H1 (cell line): ENCODE measurements at regions of chrX and their contacts with region 1.

Region 1: DNA sequence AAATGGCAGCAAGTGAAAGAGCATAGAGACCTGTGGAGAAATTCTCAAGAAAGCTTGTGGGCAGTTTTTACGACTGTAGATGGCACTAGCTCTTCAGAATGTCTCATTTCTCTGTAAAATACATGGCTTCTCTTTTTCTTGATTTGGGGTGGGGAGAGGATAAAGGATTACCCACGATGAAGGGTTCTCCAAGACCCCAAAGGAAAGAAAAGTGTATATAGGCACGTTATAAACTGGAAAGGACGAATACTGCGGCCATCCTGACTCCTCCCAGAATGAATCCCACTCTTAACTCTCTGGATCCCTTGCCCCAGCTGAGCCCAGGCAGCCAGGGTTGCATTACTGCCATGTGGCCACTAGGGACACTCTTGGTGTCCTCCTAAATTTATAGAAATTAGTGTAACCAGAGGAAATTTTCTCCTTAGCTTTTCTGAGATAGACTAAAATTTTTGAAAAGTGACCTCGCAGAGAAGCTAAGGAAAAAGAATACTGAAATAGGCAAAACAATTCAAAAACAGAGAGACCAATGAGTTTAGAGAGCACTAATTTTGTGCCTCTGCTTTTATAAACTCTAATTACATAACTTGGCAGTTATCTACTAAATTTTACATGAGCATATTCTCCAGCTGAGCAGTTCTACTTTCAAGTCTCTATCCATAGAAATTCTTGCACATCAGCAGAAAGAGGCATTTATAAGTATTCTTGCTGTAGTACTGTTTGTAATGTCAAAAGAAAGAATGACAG is 37.8 kb upstream of the PCDH19 start:
- DNase-seq: peak in 1 of 2 experiments; percentile 63
- H3K4me3 ChIP-seq: peak overlapping the region in 2 of 4 experiments; percentile 10 to 53; a peak in 3 of 8 replicates
- H3K27ac ChIP-seq: no peak overlapping the region
- H3K4me1 ChIP-seq: no peaks in the 10 kb centered on the region; a peak in 1 of 7 replicates
- H3K27me3 ChIP-seq: no peaks in the 10 kb centered on the region
- CTCF ChIP-seq: peak; percentile 46 to 72 (median 51)
- EP300 ChIP-seq: no peak
- POLR2A ChIP-seq: no peak
- RAD21 ChIP-seq: peak in 1 of 2 experiments; percentile 23; a peak in 3 of 4 replicates

Region 2: GRCh38 chrX:100435706-100436105 is 12.1 kb before region 1 on chrX:
- CTCF ChIA-PET with region 1: interaction called, 19 read pairs
- POLR2A ChIA-PET with region 1: no interaction called
- DNase-seq: no peak
- H3K4me3 ChIP-seq: no peak overlapping the region
- H3K27ac ChIP-seq: no peak overlapping the region
- H3K4me1 ChIP-seq: peaks cover 0 to 9% (median 4%) of the 10 kb centered on the region in 4 experiments; a peak in 4 of 7 replicates
- H3K27me3 ChIP-seq: no peaks in the 10 kb centered on the region
- CTCF ChIP-seq: no peak
- EP300 ChIP-seq: no peak
- POLR2A ChIP-seq: no peak
- RAD21 ChIP-seq: no peak

Region 3: DNA sequence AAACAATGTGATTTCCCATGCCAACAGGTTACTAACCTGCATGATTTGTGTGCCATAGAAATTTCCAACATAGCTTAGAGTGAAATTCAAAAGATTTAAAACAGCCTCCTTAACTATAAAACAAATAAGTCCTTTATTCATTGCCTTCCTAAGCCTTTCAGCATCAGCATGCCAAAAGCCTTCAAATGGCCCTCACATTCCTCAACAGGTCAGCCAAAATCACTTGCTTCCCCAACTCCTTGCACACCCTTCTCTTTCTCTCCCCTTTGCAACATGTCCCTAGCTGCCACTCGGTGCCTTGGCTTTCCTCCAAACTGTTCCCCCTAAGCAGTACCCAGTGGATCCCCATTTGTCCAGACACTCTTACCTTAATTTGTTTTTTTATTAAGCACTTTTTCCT is 37.1 kb after region 1 on chrX:
- CTCF ChIA-PET with region 1: interaction called, 12 read pairs
- POLR2A ChIA-PET with region 1: no interaction called
- DNase-seq: no peak
- H3K4me3 ChIP-seq: no peak overlapping the region
- H3K27ac ChIP-seq: no peak overlapping the region
- H3K4me1 ChIP-seq: 0 out of 7 replicates have a peak, but pooled peaks cover 0 to 4% (median under 1%) of the 10 kb centered on the region in 4 experiments
- H3K27me3 ChIP-seq: no peaks in the 10 kb centered on the region
- CTCF ChIP-seq: no peak
- EP300 ChIP-seq: no peak
- POLR2A ChIP-seq: no peak
- RAD21 ChIP-seq: no peak

Region 4: GRCh38 chrX:100494646-100495370 is 47.0 kb after region 1 on chrX:
- CTCF ChIA-PET with region 1: interaction called, 11 read pairs
- POLR2A ChIA-PET with region 1: no interaction called
- DNase-seq: no peak
- H3K4me3 ChIP-seq: no peak overlapping the region
- H3K27ac ChIP-seq: no peak overlapping the region
- H3K4me1 ChIP-seq: 0 out of 7 replicates have a peak, but pooled peaks cover 0 to 5% (median 0%) of the 10 kb centered on the region in 4 experiments
- H3K27me3 ChIP-seq: no peaks in the 10 kb centered on the region
- CTCF ChIP-seq: no peak
- EP300 ChIP-seq: no peak
- POLR2A ChIP-seq: no peak
- RAD21 ChIP-seq: no peak

Region 5: DNA sequence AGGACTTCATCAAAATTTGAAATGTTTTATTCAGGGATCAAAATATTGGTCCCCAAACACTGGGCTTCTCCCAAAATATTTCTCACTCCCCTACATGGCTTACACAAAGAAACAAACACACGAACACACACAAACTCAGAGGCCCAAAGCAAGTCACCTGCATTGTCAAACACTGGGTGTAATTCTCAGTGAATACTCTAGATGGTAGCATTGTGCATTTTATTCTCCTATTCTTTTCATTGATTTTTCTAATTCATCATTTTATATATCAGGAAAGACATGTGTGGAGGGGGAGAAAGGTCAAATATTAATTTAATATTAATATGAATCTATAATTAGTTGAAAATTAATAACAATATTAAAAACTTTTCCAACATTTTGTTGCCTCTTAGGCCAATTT is 64.6 kb after region 1 on chrX:
- CTCF ChIA-PET with region 1: interaction called, 11 read pairs
- POLR2A ChIA-PET with region 1: interaction called, 3 read pairs
- DNase-seq: no peak
- H3K4me3 ChIP-seq: no peak overlapping the region
- H3K27ac ChIP-seq: no peak overlapping the region
- H3K4me1 ChIP-seq: no peaks in the 10 kb centered on the region
- H3K27me3 ChIP-seq: no peaks in the 10 kb centered on the region
- CTCF ChIP-seq: peak in 2 of 3 experiments; percentile 26 to 32; a peak in 2 of 4 replicates
- EP300 ChIP-seq: no peak
- POLR2A ChIP-seq: no peak
- RAD21 ChIP-seq: peak; percentile 46 to 52

Region 6: GRCh38 chrX:100609591-100609990 is 161.8 kb after region 1 on chrX:
- CTCF ChIA-PET with region 1: interaction called, 11 read pairs
- POLR2A ChIA-PET with region 1: no interaction called
- DNase-seq: no peak
- H3K4me3 ChIP-seq: peak overlapping the region in 1 of 4 experiments; percentile 19; a peak in 1 of 8 replicates
- H3K27ac ChIP-seq: no peak overlapping the region
- H3K4me1 ChIP-seq: peaks cover 0 to 5% (median 0%) of the 10 kb centered on the region in 4 experiments; a peak in 1 of 7 replicates
- H3K27me3 ChIP-seq: no peaks in the 10 kb centered on the region
- CTCF ChIP-seq: no peak
- EP300 ChIP-seq: no peak
- POLR2A ChIP-seq: no peak
- RAD21 ChIP-seq: peak in 1 of 2 experiments; percentile 28; a peak in 3 of 4 replicates

Region 7: DNA sequence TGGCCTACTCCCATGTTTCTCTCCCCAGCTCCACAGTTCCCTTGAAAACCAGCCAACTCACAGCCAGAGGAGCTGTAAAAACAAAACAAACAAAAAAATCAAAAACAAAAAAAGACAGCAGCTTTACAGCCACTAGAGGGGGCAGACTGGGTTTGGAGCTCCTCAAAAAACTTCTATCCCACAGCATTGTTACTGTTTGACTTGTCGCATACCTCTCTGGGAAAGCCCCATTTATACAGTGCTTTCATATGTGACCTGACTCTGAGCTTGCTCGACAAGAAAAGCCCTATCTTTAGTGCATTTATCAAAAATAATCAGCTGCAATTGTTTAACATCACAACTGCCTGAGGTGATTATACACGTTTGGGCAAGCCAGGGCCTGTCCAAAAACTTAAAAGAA is 167.2 kb after region 1 on chrX:
- CTCF ChIA-PET with region 1: interaction called, 11 read pairs
- POLR2A ChIA-PET with region 1: no interaction called
- DNase-seq: no peak
- H3K4me3 ChIP-seq: no peak overlapping the region
- H3K27ac ChIP-seq: no peak overlapping the region
- H3K4me1 ChIP-seq: no peaks in the 10 kb centered on the region
- H3K27me3 ChIP-seq: no peaks in the 10 kb centered on the region
- CTCF ChIP-seq: peak in 2 of 3 experiments; percentile 49 to 52; a peak in 3 of 4 replicates
- EP300 ChIP-seq: no peak
- POLR2A ChIP-seq: no peak
- RAD21 ChIP-seq: peak; percentile 25 to 36; a peak in 2 of 4 replicates